Activated T-helper 2 cell treated with anti-CD3 and anti-CD28 coated beads, Interferon-gamma antibody, Interleukin-2, Interleukin-4, amounts not matched to agents 10 μg/mL and 5 μg/mL and 100 μg/mL, durations not matched to agents 14 hours and 24 hours and 36 hours (primary cell): ENCODE measurements at regions of chr6 and their contacts with region 1.

Region 1: GRCh38 chr6:142692942-142693341 is 252.0 kb downstream of the HIVEP2 start:
- DNase-seq: peak; percentile 28
- H3K4me3 Mint-ChIP-seq: no peak overlapping the region
- H3K27ac Mint-ChIP-seq: no peak overlapping the region
- H3K4me1 Mint-ChIP-seq: peaks cover 16% of the 10 kb centered on the region
- H3K27me3 Mint-ChIP-seq: no peaks in the 10 kb centered on the region

Region 2: GRCh38 chr6:142088858-142089216 is 604.1 kb before region 1 on chr6:
- intact Hi-C with region 1: no loop called
- DNase-seq: no peak
- H3K4me3 Mint-ChIP-seq: no peak overlapping the region
- H3K27ac Mint-ChIP-seq: no peak overlapping the region
- H3K4me1 Mint-ChIP-seq: no peaks in the 10 kb centered on the region
- H3K27me3 Mint-ChIP-seq: peaks cover 11% of the 10 kb centered on the region

Region 3: DNA sequence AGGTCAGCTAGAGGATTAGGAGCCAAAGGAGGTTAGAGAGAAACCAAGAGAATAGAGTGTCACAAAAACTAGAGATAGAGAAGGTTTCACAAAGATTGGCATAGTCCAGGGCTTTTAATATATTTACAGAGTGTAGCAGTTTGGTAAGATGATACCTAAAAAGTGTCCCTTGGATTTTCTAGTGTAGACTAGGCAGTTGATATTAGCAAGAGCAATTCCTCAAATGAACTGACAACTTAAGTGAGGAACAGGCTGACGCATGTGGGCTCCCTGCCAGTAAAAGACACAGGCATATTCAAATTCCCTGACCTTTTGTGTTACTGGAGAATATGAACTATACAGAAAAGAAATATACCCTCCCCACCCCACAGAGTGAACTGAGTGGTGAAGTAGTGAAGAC is 505.7 kb before region 1 on chr6:
- intact Hi-C with region 1: no loop called
- DNase-seq: no peak
- H3K4me3 Mint-ChIP-seq: no peak overlapping the region
- H3K27ac Mint-ChIP-seq: no peak overlapping the region
- H3K4me1 Mint-ChIP-seq: peaks cover 8% of the 10 kb centered on the region
- H3K27me3 Mint-ChIP-seq: no peaks in the 10 kb centered on the region

Region 4: DNA sequence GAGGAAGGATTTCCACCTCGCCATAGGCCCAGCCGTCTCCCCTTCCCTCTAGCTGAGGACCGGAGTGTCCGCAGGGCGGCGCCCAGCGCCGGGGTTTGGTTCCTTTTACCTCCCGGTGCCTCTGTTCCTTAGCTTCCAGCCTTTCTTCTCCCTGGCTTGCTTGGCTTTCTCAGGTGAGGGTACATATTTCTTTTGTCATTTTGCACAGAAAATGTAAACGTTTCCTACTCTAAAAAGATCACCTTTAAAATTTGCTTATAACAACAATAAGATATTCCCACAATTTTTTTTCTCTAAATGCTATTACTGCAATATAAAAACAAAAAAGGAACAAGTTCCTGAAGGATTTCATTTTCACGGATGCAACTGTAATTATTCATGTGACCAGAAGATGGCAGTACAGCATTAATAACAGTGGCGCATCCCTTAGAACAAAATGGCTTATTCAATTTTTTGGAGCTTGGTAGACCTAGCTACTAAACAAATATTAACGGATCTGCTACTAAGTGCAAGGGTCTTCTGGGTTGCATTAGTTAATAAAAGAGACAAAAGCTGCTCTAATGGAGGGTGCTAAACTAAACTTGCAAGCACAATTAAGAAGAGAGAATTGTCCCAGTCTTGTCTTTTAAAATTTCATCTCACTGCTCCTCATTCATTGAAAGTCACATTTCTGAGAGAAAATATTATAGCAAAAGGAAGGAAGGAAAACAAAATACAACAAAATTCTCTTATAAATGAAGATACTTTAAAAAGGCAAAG is 218.2 kb before region 1 on chr6:
- intact Hi-C with region 1: loop called (anchors 10 kb)
- DNase-seq: no peak
- H3K4me3 Mint-ChIP-seq: no peak overlapping the region
- H3K27ac Mint-ChIP-seq: no peak overlapping the region
- H3K4me1 Mint-ChIP-seq: peaks cover 3% of the 10 kb centered on the region
- H3K27me3 Mint-ChIP-seq: peaks cover 8% of the 10 kb centered on the region

Region 5: GRCh38 chr6:142613981-142614380 is 79.0 kb before region 1 on chr6:
- intact Hi-C with region 1: no loop called
- DNase-seq: no peak
- H3K4me3 Mint-ChIP-seq: no peak overlapping the region
- H3K27ac Mint-ChIP-seq: no peak overlapping the region
- H3K4me1 Mint-ChIP-seq: no peaks in the 10 kb centered on the region
- H3K27me3 Mint-ChIP-seq: peaks cover 2% of the 10 kb centered on the region

Region 6: GRCh38 chr6:142802124-142802523 is 109.2 kb after region 1 on chr6:
- intact Hi-C with region 1: loop called (anchors 5 kb)
- DNase-seq: no peak
- H3K4me3 Mint-ChIP-seq: no peak overlapping the region
- H3K27ac Mint-ChIP-seq: peak overlapping the region; percentile 56
- H3K4me1 Mint-ChIP-seq: peaks cover 41% of the 10 kb centered on the region
- H3K27me3 Mint-ChIP-seq: no peaks in the 10 kb centered on the region

Region 7: DNA sequence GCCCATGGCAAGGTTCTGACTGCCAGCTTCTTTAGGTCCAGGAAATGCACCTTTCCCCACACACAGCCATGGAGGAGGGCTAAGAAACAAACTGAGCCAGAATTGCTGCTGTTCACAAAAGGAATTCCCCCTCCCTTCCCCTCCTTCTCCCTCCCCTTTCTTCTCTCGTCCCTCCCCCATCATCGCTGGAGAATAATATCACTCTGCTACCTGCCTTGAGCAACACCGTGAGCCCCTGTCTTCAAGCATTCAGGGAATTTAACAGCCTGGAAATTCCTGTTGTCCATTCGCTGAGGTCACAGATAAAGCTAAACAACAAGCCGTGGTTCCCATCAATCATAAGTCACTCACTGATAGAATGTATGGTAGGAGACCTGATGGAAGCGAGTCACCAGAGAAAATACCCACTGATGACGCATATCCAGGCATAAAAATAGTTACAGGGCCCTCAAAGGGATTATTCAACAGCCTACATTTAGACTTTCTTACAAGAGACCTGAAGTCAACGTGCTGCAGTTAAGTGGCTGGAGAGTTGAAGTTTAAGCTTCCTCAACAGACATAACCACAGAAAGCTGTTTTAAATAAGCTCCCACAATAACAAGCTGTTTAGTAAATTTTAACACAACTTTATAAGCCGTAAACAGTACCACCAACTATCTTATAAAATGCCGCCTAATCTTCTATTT is 192.4 kb after region 1 on chr6:
- intact Hi-C with region 1: loop called (anchors 10 kb)
- DNase-seq: peak; percentile 26
- H3K4me3 Mint-ChIP-seq: peak overlapping the region; percentile 92
- H3K27ac Mint-ChIP-seq: peak overlapping the region; percentile 99
- H3K4me1 Mint-ChIP-seq: peaks cover 65% of the 10 kb centered on the region
- H3K27me3 Mint-ChIP-seq: no peaks in the 10 kb centered on the region

Region 8: DNA sequence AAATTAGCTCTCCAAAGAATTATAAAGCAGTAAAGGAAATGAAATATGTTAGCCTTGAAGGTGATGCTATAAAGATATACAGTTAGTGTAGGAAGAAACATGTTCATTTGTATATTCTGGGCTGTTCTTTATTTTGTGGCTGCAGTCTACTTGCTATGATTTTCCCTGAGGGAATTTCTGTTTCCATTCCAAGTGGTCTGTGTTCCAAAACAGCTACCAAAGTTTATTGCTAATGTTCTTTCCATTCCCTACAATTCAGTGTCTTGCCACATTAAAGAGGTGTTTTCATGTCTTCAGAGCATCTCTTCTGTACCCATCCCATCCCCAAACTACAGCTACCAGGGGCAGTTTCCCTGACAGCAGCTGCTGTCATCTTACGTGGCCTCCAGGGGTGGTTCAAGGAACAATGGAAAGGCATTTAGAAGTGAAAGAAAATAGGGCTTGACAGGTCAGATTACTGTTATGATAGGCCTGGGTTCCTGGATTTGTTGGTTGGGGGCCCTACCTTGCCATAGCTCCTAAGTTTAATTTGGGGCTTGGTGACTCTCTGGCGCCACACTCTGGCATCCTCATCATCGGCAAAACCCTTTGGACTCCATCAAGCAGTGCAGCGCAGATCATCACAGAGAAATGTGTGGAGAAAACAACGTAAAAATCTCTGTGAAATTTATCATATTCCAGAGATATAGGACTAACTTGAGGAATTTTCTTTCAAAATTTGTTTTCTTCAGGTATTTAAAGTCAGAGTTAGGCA is 333.9 kb after region 1 on chr6:
- intact Hi-C with region 1: loop called (anchors 1 kb)
- DNase-seq: peak; percentile 21
- H3K4me3 Mint-ChIP-seq: no peak overlapping the region
- H3K27ac Mint-ChIP-seq: no peak overlapping the region
- H3K4me1 Mint-ChIP-seq: peaks cover 3% of the 10 kb centered on the region
- H3K27me3 Mint-ChIP-seq: no peaks in the 10 kb centered on the region

Region 9: GRCh38 chr6:143337201-143337949 is 644.4 kb after region 1 on chr6:
- intact Hi-C with region 1: loop called (anchors 10 kb)
- DNase-seq: peak; percentile 24
- H3K4me3 Mint-ChIP-seq: no peak overlapping the region
- H3K27ac Mint-ChIP-seq: no peak overlapping the region
- H3K4me1 Mint-ChIP-seq: peaks cover 9% of the 10 kb centered on the region
- H3K27me3 Mint-ChIP-seq: no peaks in the 10 kb centered on the region

Region 10: DNA sequence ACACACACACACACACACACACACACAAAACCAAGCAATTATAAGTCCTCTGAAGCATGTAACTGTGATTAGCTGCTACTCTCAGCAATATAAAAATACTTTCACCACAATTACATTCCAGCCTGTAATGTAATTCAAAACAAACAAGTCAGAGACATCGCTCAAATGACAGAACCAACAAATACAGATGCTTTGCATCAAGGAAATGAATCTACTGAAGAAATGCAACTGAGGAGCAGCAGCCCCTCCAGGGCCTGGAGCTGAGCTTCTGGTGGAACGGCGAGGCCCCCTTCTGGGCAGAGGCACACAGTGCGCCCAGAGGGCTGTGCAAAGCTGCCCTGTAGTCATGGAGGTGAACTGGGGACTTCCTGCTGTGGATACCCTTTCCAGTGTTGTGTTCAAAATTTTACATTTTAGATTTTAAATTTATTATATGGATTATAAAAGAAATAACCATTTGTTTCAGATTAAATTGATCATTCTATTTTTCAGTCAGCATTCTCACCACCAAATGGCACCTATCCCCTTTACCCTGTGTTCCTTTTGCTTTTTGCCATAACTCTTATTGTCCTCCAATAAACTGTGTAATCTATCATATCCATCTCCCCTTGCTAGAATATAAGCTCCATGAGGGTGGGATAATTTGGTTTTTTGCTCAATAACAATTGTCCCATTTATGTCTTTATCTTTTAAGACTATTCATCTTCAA is 734.3 kb after region 1 on chr6:
- intact Hi-C with region 1: loop called (anchors 1 kb)
- DNase-seq: peak; percentile 57
- H3K4me3 Mint-ChIP-seq: no peak overlapping the region
- H3K27ac Mint-ChIP-seq: peak overlapping the region; percentile 22
- H3K4me1 Mint-ChIP-seq: peaks cover 4% of the 10 kb centered on the region
- H3K27me3 Mint-ChIP-seq: no peaks in the 10 kb centered on the region